GM12878 (cell line): ENCODE measurements at regions of chr18 and their contacts with region 1.

Region 1: GRCh38 chr18:56632070-56633022 is 6.0 kb downstream of the TXNL1 start:
- DNase-seq: no peak
- ATAC-seq: no peak
- H3K4me3 ChIP-seq: no peak overlapping the region
- H3K27ac ChIP-seq: no peak overlapping the region
- H3K4me1 ChIP-seq: no peaks in the 10 kb centered on the region
- H3K27me3 ChIP-seq: no peaks in the 10 kb centered on the region
- CTCF ChIP-seq: no peak
- EP300 ChIP-seq: no peak
- POLR2A ChIP-seq: no peak
- RAD21 ChIP-seq: no peak

Region 2: GRCh38 chr18:56645415-56646016 is 13.2 kb after region 1 on chr18:
- CTCF ChIA-PET with region 1: interaction called, 13 read pairs
- POLR2A ChIA-PET with region 1: interaction called, 39 read pairs
- RAD21 ChIA-PET with region 1: interaction called, 12 read pairs
- SMC1A ChIA-PET with region 1: interaction called, 12 read pairs
- in situ Hi-C with region 1: no loop called
- intact Hi-C with region 1: no loop called
- DNase-seq: no peak
- ATAC-seq: peak; percentile 49
- H3K4me3 ChIP-seq: no peak overlapping the region
- H3K27ac ChIP-seq: no peak overlapping the region
- H3K4me1 ChIP-seq: no peaks in the 10 kb centered on the region; the same call in none of the 2 replicates
- H3K27me3 ChIP-seq: no peaks in the 10 kb centered on the region
- CTCF ChIP-seq: peak; percentile 40 to 62 (median 60); a peak in 5 of 6 replicates
- EP300 ChIP-seq: no peak
- POLR2A ChIP-seq: no peak
- RAD21 ChIP-seq: peak; percentile 37; the same call in 1 of the 2 replicates

Region 3: DNA sequence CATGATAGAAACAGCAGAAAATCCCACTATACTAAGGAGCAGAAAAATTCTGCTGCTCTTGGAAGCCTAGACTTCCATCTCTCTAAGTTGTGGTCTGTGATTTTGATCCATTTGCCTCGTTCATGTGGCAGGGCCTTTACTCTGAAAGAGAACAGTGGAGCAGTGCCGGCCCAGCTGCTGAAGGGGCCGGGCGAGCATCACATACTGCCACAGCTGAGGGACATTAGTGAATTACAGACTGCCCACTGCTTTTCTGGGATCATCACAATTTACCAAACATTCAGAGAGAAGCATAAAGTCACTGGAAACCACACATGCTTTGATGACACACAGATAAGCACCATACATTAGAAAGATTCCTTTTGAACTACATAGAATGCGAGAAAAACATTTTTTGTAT is 297.5 kb after region 1 on chr18:
- CTCF ChIA-PET with region 1: no interaction called
- POLR2A ChIA-PET with region 1: no interaction called
- RAD21 ChIA-PET with region 1: no interaction called
- SMC1A ChIA-PET with region 1: no interaction called
- in situ Hi-C with region 1: no loop called
- intact Hi-C with region 1: no loop called
- DNase-seq: no peak
- ATAC-seq: no peak
- H3K4me3 ChIP-seq: no peak overlapping the region
- H3K27ac ChIP-seq: no peak overlapping the region
- H3K4me1 ChIP-seq: no peaks in the 10 kb centered on the region
- H3K27me3 ChIP-seq: no peaks in the 10 kb centered on the region
- CTCF ChIP-seq: no peak
- EP300 ChIP-seq: no peak
- POLR2A ChIP-seq: no peak
- RAD21 ChIP-seq: no peak

Region 4: DNA sequence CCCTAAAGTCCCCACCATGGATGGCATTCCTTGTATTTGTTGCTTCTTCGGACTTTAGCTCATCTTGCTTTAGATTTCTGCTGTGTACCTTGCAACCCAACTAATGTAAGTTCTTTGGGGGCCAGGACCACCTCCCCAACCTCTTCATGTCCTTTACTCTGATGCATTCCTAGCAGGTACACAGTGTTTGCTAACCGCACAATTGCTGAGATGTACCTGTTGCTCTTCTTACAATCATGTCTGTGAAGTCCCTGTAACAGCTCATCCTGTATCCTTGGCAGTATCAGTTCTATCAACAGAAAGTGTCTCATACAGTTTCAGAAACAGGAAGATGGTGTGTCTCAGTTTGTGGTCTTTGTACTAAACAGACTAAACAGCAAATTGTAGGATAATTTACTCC is 744.2 kb after region 1 on chr18:
- CTCF ChIA-PET with region 1: no interaction called
- POLR2A ChIA-PET with region 1: no interaction called
- RAD21 ChIA-PET with region 1: no interaction called
- SMC1A ChIA-PET with region 1: no interaction called
- in situ Hi-C with region 1: no loop called
- intact Hi-C with region 1: no loop called
- DNase-seq: no peak
- ATAC-seq: no peak
- H3K4me3 ChIP-seq: no peak overlapping the region
- H3K27ac ChIP-seq: no peak overlapping the region
- H3K4me1 ChIP-seq: no peaks in the 10 kb centered on the region
- H3K27me3 ChIP-seq: no peaks in the 10 kb centered on the region
- CTCF ChIP-seq: no peak
- EP300 ChIP-seq: no peak
- POLR2A ChIP-seq: no peak
- RAD21 ChIP-seq: no peak